ENCODE measurements at regions of chr2 and their contacts with region 1.

Region 1: GRCh38 chr2:102442967-102443828 is 20.2 kb downstream of the IL18RAP start:
- DNase-seq: peak; percentile 61
- H3K4me3 Mint-ChIP-seq: peak overlapping the region; percentile 17
- H3K27ac Mint-ChIP-seq: no peak overlapping the region
- H3K4me1 Mint-ChIP-seq: peaks cover 13% of the 10 kb centered on the region
- H3K27me3 Mint-ChIP-seq: no peaks in the 10 kb centered on the region

Region 2: DNA sequence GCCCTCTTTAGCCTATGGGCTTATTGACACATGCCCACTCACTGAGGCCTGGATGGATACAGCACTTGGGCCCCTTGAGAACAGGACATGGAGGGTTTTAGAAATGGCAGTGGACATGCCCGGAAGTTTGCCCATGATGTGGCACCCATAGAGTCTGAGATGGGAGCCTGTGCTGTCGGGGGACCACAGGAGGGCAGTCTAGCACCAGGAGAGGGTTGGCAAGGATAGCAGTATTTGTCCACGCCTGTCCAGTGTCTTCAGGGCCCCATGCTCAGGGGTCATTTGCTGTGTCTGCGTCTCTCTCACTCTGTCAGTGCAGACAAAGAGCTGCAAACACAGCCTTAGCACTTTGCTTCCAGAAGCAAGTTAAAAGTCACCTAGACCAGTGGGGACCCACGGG is 207.7 kb before region 1 on chr2:
- CTCF ChIA-PET with region 1: interaction called, 55 read pairs
- DNase-seq: peak; percentile 56
- H3K4me3 Mint-ChIP-seq: no peak overlapping the region
- H3K27ac Mint-ChIP-seq: no peak overlapping the region
- H3K4me1 Mint-ChIP-seq: peaks cover 37% of the 10 kb centered on the region
- H3K27me3 Mint-ChIP-seq: peaks cover 3% of the 10 kb centered on the region

Region 3: DNA sequence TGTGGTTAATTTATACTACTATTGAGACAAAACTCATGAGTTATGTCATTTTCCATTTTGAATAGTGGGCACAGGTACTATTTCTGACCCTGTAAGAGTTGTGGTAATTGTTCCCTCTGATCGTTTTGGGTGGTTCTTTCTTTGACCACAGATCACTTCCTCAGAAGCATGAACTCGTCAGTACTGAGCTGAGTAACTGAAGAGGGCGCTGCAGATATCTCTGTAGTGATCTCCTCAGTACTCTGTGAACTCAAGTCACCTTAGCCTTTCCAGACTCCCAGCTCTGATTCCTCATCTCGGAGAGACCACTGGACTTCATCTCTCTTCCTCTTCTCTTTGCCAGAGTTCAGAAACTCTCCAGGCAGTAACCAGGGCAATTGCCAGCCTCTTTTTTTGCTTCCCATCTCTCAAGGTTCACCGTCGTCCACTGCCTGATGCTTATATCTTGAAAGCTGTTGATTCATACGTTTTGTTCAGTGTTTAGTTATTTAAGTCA is 141.3 kb before region 1 on chr2:
- CTCF ChIA-PET with region 1: interaction called, 16 read pairs
- DNase-seq: peak; percentile 63
- H3K4me3 Mint-ChIP-seq: no peak overlapping the region
- H3K27ac Mint-ChIP-seq: peak overlapping the region; percentile 39
- H3K4me1 Mint-ChIP-seq: peaks cover 38% of the 10 kb centered on the region
- H3K27me3 Mint-ChIP-seq: no peaks in the 10 kb centered on the region

Region 4: GRCh38 chr2:102366406-102367112 is 76.6 kb before region 1 on chr2:
- CTCF ChIA-PET with region 1: interaction called, 17 read pairs
- DNase-seq: no peak
- H3K4me3 Mint-ChIP-seq: peak overlapping the region; percentile 48
- H3K27ac Mint-ChIP-seq: peak overlapping the region; percentile 93
- H3K4me1 Mint-ChIP-seq: peaks cover 73% of the 10 kb centered on the region
- H3K27me3 Mint-ChIP-seq: no peaks in the 10 kb centered on the region

Region 5: DNA sequence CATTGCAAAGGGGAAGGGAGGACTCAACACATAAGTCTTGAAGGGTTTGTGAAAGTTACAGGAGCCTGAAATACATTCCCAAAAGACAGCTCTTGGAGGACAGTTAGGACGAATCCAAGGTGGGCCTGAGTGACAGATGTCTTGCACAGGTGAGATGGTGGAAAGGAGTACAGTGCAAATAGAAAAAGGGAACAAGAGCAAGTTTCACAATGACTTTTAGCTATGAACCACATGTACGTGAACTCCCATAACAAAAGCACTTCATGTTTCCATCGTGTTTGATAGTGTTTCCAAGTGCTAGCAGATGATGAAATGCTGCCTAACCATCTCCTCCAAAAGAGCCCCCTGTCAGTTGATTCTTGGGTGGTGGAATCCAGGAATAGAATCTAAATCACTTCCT is 18.4 kb before region 1 on chr2:
- CTCF ChIA-PET with region 1: interaction called, 25 read pairs
- DNase-seq: no peak
- H3K4me3 Mint-ChIP-seq: no peak overlapping the region
- H3K27ac Mint-ChIP-seq: peak overlapping the region; percentile 11
- H3K4me1 Mint-ChIP-seq: peaks cover 73% of the 10 kb centered on the region
- H3K27me3 Mint-ChIP-seq: no peaks in the 10 kb centered on the region

Measured in activated naive CD4-positive, alpha-beta T cell treated with anti-CD3 and anti-CD28 coated beads, Interleukin-2, amount 10 ng/mL, durations not matched to agents 7 days and 5 days (primary cell).